Astrocyte of the cerebellum (primary cell): ENCODE measurements at regions of chr4 and their contacts with region 1.

Region 1: DNA sequence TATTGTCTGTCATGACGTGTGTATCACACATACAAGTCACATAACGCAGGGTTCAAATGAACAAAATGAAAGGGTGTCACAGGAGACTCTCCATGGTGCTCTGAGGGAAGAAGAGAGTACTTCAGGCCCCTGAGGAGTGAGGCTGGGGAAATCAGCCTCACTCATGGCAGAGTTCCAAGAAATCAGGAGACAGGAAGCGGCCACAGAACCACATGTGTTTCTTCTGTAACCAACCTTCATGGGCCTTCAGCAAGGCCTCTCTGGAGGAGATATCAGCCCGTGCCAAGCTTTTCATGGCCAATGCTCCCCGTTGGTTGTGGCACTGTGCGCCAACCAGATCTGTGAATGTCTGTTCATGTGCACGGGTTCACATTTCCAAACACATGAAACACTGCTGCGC is 76.0 kb downstream of the NAT8L start:
- DNase-seq: peak; percentile 54
- H3K4me3 ChIP-seq: no peak overlapping the region
- CTCF ChIP-seq: no peak

Region 2: GRCh38 chr4:2036866-2037265 is 98.2 kb before region 1 on chr4:
- in situ Hi-C with region 1: loop called (anchors 5 kb)
- DNase-seq: no peak
- H3K4me3 ChIP-seq: no peak overlapping the region
- CTCF ChIP-seq: no peak

Region 3: GRCh38 chr4:2163311-2163821 is 28.3 kb after region 1 on chr4:
- in situ Hi-C with region 1: no loop called
- DNase-seq: no peak
- H3K4me3 ChIP-seq: no peak overlapping the region
- CTCF ChIP-seq: no peak

Region 4: DNA sequence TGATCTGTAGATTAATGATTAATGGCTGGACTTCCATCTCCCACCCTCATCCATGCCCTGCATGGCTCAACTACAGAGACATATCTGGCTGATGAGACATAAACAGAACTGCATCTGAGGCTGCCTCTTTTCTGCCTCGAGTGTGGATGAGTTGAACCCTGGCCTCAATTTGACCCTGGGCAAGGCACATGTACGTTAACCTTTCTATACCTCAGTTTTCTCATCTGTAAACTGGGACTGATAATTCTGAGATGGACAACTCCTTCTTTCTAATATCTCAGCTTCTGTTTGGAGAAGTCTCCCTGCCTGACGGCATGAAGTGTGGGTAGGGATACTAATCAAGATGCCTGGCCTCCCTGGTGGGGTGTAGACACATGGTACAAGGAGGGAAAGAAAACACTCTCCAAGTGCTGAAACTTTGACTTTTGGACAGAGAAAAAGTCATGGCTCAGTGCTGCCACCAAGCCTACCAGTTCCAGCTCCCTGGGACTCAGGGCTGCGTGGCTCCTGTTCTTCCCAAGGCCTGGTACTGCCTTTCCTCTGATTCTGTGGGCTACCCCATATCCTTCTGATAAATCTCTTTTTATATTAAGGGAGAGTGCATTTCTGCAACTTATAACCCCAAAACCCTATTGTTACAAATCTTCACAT is 42.5 kb after region 1 on chr4:
- in situ Hi-C with region 1: loop called (anchors 5 kb)
- DNase-seq: no peak
- H3K4me3 ChIP-seq: no peak overlapping the region
- CTCF ChIP-seq: no peak